ENCODE measurements at regions of chr11 and their contacts with region 1.

Region 1: DNA sequence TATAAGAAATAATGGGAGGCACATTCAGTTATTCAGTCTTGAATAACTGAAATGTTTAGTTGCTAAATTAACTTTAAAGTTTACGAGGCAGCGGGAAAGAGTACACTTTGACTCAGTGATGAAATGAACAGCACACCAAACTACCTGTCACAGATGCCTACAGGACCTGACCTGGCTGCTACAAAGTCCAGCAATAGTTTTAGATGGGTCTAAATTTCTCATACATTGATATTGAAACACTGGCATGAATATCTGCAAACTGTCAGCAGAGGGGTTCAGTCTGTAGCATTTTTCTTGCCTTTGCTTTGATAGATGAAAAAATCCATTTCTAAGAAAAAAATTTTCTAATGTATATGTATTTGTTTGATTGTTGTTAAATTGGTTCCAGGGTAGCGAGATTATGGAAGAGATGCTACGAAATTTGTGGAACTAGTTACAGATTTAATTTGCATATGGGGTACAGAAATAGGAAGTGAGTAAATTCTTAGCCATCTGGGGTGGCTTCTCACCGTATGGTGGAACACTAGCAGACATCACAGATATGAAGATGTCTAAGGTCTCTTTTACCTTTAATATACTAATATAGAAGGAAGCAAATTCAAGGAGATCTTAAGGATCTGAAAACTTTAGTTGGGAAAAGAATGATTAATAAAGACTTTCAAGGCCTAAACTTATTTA is 20.8 kb upstream of the GAB2 start:
- DNase-seq: peak; percentile 79
- ATAC-seq: peak; percentile 96
- H3K4me3 ChIP-seq: no peak overlapping the region
- H3K4me3 Mint-ChIP-seq: peak overlapping the region; percentile 18
- H3K27ac ChIP-seq: peak overlapping the region; percentile 28 to 64
- H3K27ac Mint-ChIP-seq: peak overlapping the region; percentile 46
- H3K4me1 ChIP-seq: peaks cover 15 to 21% of the 10 kb centered on the region in 2 donors
- H3K4me1 Mint-ChIP-seq: peaks cover 27% of the 10 kb centered on the region
- H3K27me3 ChIP-seq: no peaks in the 10 kb centered on the region
- H3K27me3 Mint-ChIP-seq: no peaks in the 10 kb centered on the region
- CTCF ChIP-seq: no peak

Region 2: GRCh38 chr11:77442394-77443053 is 995.9 kb before region 1 on chr11:
- CTCF ChIA-PET with region 1: no interaction called
- POLR2A ChIA-PET with region 1: no interaction called
- intact Hi-C with region 1: no loop called
- DNase-seq: no peak
- ATAC-seq: no peak
- H3K4me3 ChIP-seq: no peak overlapping the region
- H3K4me3 Mint-ChIP-seq: no peak overlapping the region
- H3K27ac ChIP-seq: no peak overlapping the region
- H3K27ac Mint-ChIP-seq: no peak overlapping the region
- H3K4me1 ChIP-seq: peaks cover 3% of the 10 kb centered on the region in 2 donors
- H3K4me1 Mint-ChIP-seq: peaks cover 7% of the 10 kb centered on the region
- H3K27me3 ChIP-seq: no peaks in the 10 kb centered on the region
- H3K27me3 Mint-ChIP-seq: peaks cover 5% of the 10 kb centered on the region
- CTCF ChIP-seq: no peak

Region 3: DNA sequence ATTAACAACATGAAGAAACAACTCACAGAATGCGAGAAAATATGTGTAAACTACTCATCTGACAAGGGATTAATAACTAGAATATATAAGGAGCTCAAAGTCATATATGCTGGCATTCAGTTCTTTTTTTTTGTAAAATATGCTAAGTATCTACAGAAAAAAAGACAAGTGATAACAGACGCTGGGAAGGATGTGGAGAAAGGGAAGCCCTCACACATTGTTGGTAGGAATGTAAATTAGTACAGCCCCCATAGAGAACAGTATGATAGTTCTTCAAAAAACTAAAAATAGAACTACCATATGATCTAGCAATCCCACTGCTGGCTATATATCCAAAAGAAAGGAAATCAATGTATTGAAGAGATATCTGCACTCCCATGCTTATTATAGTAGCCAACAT is 34.7 kb before region 1 on chr11:
- CTCF ChIA-PET with region 1: no interaction called
- POLR2A ChIA-PET with region 1: no interaction called
- intact Hi-C with region 1: no loop called
- DNase-seq: no peak
- ATAC-seq: no peak
- H3K4me3 ChIP-seq: no peak overlapping the region
- H3K4me3 Mint-ChIP-seq: no peak overlapping the region
- H3K27ac ChIP-seq: no peak overlapping the region
- H3K27ac Mint-ChIP-seq: no peak overlapping the region
- H3K4me1 ChIP-seq: peaks cover 5 to 6% of the 10 kb centered on the region in 2 donors
- H3K4me1 Mint-ChIP-seq: peaks cover 42% of the 10 kb centered on the region
- H3K27me3 ChIP-seq: no peaks in the 10 kb centered on the region
- H3K27me3 Mint-ChIP-seq: no peaks in the 10 kb centered on the region
- CTCF ChIP-seq: no peak

Region 4: GRCh38 chr11:78533399-78533798 is 95.0 kb after region 1 on chr11:
- CTCF ChIA-PET with region 1: no interaction called
- POLR2A ChIA-PET with region 1: no interaction called
- intact Hi-C with region 1: loop called (anchors 5 kb)
- DNase-seq: peak; percentile 68
- ATAC-seq: peak; percentile 69
- H3K4me3 ChIP-seq: peak overlapping the region in 1 of 5 experiments; percentile 55
- H3K4me3 Mint-ChIP-seq: peak overlapping the region; percentile 29
- H3K27ac ChIP-seq: peak overlapping the region; percentile 69 to 90
- H3K27ac Mint-ChIP-seq: peak overlapping the region; percentile 87
- H3K4me1 ChIP-seq: peaks cover 20 to 28% of the 10 kb centered on the region in 2 donors
- H3K4me1 Mint-ChIP-seq: peaks cover 34% of the 10 kb centered on the region
- H3K27me3 ChIP-seq: no peaks in the 10 kb centered on the region
- H3K27me3 Mint-ChIP-seq: no peaks in the 10 kb centered on the region
- CTCF ChIP-seq: no peak

Region 5: DNA sequence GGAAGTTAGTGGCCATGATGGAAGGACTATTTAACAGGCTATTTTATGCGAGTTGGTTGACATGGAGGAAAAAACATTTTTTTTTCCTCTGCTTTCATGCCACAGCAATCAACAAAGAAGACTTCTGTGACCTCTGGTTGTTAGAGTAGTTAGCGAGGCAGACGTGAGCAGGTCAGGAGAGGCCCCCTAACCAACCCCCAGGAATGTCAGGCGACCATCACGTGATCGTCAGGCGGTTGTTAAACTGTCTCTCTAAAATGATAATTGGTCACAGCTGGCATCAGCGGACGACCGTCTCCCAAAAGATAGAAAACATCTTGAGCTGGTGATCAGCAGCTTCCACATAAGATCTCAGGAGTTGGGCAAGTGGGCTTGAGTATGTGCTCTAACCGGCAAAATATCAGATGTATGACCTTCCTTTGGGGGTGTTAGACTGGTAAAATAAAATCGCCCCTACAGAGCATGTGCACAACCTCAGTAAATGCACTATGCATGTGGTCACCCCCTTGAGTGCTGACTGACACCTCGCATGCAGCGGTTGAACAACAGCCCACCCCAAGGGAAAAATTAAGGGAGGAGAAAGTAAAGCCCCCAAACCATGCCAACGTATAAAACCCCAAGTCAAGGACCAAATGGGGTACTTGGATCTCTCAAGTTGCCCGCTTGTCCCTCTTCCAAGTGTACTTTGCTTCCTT is 157.1 kb after region 1 on chr11:
- CTCF ChIA-PET with region 1: no interaction called
- POLR2A ChIA-PET with region 1: no interaction called
- intact Hi-C with region 1: no loop called
- DNase-seq: no peak
- ATAC-seq: no peak
- H3K4me3 ChIP-seq: no peak overlapping the region
- H3K4me3 Mint-ChIP-seq: no peak overlapping the region
- H3K27ac ChIP-seq: no peak overlapping the region
- H3K27ac Mint-ChIP-seq: no peak overlapping the region
- H3K4me1 ChIP-seq: no peaks in the 10 kb centered on the region
- H3K4me1 Mint-ChIP-seq: no peaks in the 10 kb centered on the region
- H3K27me3 ChIP-seq: no peaks in the 10 kb centered on the region
- H3K27me3 Mint-ChIP-seq: peaks cover 17% of the 10 kb centered on the region
- CTCF ChIP-seq: no peak

Region 6: GRCh38 chr11:78606674-78607073 is 168.2 kb after region 1 on chr11:
- CTCF ChIA-PET with region 1: no interaction called
- POLR2A ChIA-PET with region 1: no interaction called
- intact Hi-C with region 1: no loop called
- DNase-seq: no peak
- ATAC-seq: no peak
- H3K4me3 ChIP-seq: no peak overlapping the region
- H3K4me3 Mint-ChIP-seq: no peak overlapping the region
- H3K27ac ChIP-seq: no peak overlapping the region
- H3K27ac Mint-ChIP-seq: no peak overlapping the region
- H3K4me1 ChIP-seq: no peaks in the 10 kb centered on the region
- H3K4me1 Mint-ChIP-seq: no peaks in the 10 kb centered on the region
- H3K27me3 ChIP-seq: peaks cover 0 to 8% (median 3%) of the 10 kb centered on the region in 4 experiments
- H3K27me3 Mint-ChIP-seq: peaks cover 34% of the 10 kb centered on the region
- CTCF ChIP-seq: no peak